CD4-positive, alpha-beta memory T cell (primary cell): ENCODE measurements at regions of chr10 and their contacts with region 1.

Region 1: GRCh38 chr10:88932539-88933256 is 19.9 kb downstream of the ACTA2 start:
- DNase-seq: peak; percentile 48 to 59 (median 55)
- H3K4me3 ChIP-seq: no peak overlapping the region
- H3K4me3 Mint-ChIP-seq: no peak overlapping the region
- H3K27ac ChIP-seq: no peak overlapping the region
- H3K27ac Mint-ChIP-seq: peak overlapping the region in 5 of 7 donors; percentile 13 to 76 (median 60)
- H3K4me1 ChIP-seq: peaks cover 15% of the 10 kb centered on the region
- H3K4me1 Mint-ChIP-seq: peaks cover 13 to 22% (median 15%) of the 10 kb centered on the region in 4 donors
- H3K27me3 ChIP-seq: no peaks in the 10 kb centered on the region
- H3K27me3 Mint-ChIP-seq: no peaks in the 10 kb centered on the region

Region 2: DNA sequence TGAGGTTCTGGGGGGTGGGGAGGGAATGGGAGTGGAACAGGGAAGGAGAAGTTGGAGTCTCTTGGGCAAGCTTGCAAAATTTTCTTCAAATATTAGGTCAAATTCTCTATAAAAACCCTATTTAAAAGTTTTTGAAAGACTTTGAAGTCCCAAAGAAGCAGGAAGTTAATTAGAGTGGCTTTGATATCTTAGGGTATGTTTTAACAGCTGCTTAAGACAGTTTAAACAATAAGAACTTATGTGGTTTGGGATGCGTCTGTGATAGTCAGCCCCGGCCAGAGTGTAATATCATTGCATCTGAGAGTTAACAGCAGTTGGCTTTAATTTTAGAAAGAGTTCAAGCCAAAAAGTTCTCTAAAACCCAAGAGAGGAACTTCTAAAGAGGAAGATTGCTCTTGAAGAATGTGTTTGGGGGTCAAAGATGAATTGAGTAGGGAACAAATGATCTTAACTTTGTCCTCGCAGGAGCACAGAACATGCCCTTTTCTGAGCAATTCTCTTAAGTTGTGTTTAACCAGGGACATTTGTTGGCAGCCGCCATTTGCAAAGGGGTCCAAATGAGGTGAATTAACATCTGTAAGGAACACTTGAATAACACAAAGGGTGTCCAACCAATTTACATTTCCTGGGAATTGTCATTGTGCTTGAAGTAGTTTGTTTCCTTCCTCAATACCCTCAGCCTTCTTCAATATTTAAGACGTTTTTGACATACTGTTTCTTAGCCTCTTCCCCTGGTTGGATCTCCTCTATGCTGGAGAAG is 886.9 kb before region 1 on chr10:
- CTCF ChIA-PET with region 1: no interaction called
- POLR2A ChIA-PET with region 1: no interaction called
- intact Hi-C with region 1: no loop called
- DNase-seq: no peak
- H3K4me3 ChIP-seq: no peak overlapping the region
- H3K4me3 Mint-ChIP-seq: no peak overlapping the region
- H3K27ac ChIP-seq: no peak overlapping the region
- H3K27ac Mint-ChIP-seq: no peak overlapping the region
- H3K4me1 ChIP-seq: peaks cover 5% of the 10 kb centered on the region
- H3K4me1 Mint-ChIP-seq: peaks cover 0 to 5% (median 1%) of the 10 kb centered on the region in 4 donors
- H3K27me3 ChIP-seq: no peaks in the 10 kb centered on the region
- H3K27me3 Mint-ChIP-seq: no peaks in the 10 kb centered on the region

Region 3: GRCh38 chr10:88687853-88688467 is 244.7 kb before region 1 on chr10:
- CTCF ChIA-PET with region 1: interaction called, 14 read pairs
- POLR2A ChIA-PET with region 1: no interaction called
- intact Hi-C with region 1: no loop called
- DNase-seq: peak in 4 of 5 donors; percentile 18 to 26 (median 21)
- H3K4me3 ChIP-seq: no peak overlapping the region
- H3K4me3 Mint-ChIP-seq: no peak overlapping the region
- H3K27ac ChIP-seq: no peak overlapping the region
- H3K27ac Mint-ChIP-seq: no peak overlapping the region
- H3K4me1 ChIP-seq: no peaks in the 10 kb centered on the region
- H3K4me1 Mint-ChIP-seq: no peaks in the 10 kb centered on the region
- H3K27me3 ChIP-seq: no peaks in the 10 kb centered on the region
- H3K27me3 Mint-ChIP-seq: peaks cover 0 to 2% of the 10 kb centered on the region in 2 donors

Region 4: DNA sequence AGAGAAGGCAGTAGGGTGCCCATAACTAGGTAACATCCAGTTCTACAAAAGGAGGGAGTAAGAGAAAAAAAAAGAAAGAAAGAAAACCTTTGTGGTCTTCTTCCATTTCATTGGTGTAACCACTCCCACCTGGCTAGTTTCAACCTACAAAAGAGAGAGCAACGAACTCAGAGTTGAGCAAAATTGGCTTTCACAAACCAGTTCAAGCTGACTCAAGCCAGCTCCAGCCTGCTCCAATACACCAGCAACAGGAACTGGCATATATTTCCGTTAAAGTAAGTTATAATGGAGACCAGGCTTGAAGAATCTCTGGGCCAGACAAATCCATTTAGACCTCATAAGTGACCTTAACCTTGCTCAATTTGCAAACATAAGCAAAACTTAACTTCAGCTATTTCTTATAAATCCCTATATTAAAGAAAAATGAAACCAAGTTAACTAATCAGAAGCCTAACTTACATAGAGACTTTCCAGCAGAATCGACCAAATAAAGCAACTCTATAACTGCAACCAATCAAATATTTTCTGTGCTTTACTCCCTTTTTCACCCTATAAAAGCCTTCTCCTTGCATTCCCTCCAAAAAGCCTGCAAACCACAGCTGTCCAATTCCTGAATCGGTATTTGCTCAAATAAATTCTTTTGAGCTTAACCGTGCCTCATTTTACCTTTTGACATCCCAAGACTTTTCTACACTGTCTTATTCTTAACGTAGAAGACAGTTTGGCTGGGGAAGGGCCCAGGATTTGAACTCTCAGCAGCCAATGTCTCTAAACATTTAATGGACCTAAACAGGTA is 91.2 kb before region 1 on chr10:
- CTCF ChIA-PET with region 1: interaction called, 507 read pairs
- POLR2A ChIA-PET with region 1: interaction called, 23 read pairs
- intact Hi-C with region 1: no loop called
- DNase-seq: no peak
- H3K4me3 ChIP-seq: no peak overlapping the region
- H3K4me3 Mint-ChIP-seq: no peak overlapping the region
- H3K27ac ChIP-seq: no peak overlapping the region
- H3K27ac Mint-ChIP-seq: peak overlapping the region in 1 of 7 donors; percentile 19
- H3K4me1 ChIP-seq: no peaks in the 10 kb centered on the region
- H3K4me1 Mint-ChIP-seq: no peaks in the 10 kb centered on the region
- H3K27me3 ChIP-seq: no peaks in the 10 kb centered on the region
- H3K27me3 Mint-ChIP-seq: peaks cover 5 to 6% of the 10 kb centered on the region in 2 donors

Region 5: GRCh38 chr10:88901206-88901983 is 31.3 kb before region 1 on chr10:
- CTCF ChIA-PET with region 1: interaction called, 21 read pairs
- POLR2A ChIA-PET with region 1: no interaction called
- intact Hi-C with region 1: no loop called
- DNase-seq: no peak
- H3K4me3 ChIP-seq: no peak overlapping the region
- H3K4me3 Mint-ChIP-seq: no peak overlapping the region
- H3K27ac ChIP-seq: no peak overlapping the region
- H3K27ac Mint-ChIP-seq: peak overlapping the region in 2 of 7 donors; percentile 23 to 49
- H3K4me1 ChIP-seq: peaks cover 47% of the 10 kb centered on the region
- H3K4me1 Mint-ChIP-seq: peaks cover 32 to 44% (median 38%) of the 10 kb centered on the region in 4 donors
- H3K27me3 ChIP-seq: no peaks in the 10 kb centered on the region
- H3K27me3 Mint-ChIP-seq: no peaks in the 10 kb centered on the region

Region 6: GRCh38 chr10:88990384-88991160 is 57.9 kb after region 1 on chr10 and contains the start of gene FAS:
- CTCF ChIA-PET with region 1: interaction called, 138 read pairs
- POLR2A ChIA-PET with region 1: interaction called, 8 read pairs
- intact Hi-C with region 1: loop called (anchors 1 kb)
- DNase-seq: peak; percentile 80 to 95 (median 83)
- H3K4me3 ChIP-seq: peak within 1 kb of the TSS; percentile 68 to 81
- H3K4me3 Mint-ChIP-seq: peak within 1 kb of the TSS; percentile 95 to 100 (median 99)
- H3K27ac ChIP-seq: peak within 1 kb of the TSS; percentile 93
- H3K27ac Mint-ChIP-seq: peak within 1 kb of the TSS; percentile 96 to 100 (median 97)
- H3K4me1 ChIP-seq: peaks cover 71% of the 10 kb centered on the region
- H3K4me1 Mint-ChIP-seq: peaks cover 53 to 82% (median 63%) of the 10 kb centered on the region in 4 donors
- H3K27me3 ChIP-seq: no peaks in the 10 kb centered on the region
- H3K27me3 Mint-ChIP-seq: no peaks in the 10 kb centered on the region
- total RNA-seq, gene FAS: 42.4 to 44.2 TPM

Region 7: DNA sequence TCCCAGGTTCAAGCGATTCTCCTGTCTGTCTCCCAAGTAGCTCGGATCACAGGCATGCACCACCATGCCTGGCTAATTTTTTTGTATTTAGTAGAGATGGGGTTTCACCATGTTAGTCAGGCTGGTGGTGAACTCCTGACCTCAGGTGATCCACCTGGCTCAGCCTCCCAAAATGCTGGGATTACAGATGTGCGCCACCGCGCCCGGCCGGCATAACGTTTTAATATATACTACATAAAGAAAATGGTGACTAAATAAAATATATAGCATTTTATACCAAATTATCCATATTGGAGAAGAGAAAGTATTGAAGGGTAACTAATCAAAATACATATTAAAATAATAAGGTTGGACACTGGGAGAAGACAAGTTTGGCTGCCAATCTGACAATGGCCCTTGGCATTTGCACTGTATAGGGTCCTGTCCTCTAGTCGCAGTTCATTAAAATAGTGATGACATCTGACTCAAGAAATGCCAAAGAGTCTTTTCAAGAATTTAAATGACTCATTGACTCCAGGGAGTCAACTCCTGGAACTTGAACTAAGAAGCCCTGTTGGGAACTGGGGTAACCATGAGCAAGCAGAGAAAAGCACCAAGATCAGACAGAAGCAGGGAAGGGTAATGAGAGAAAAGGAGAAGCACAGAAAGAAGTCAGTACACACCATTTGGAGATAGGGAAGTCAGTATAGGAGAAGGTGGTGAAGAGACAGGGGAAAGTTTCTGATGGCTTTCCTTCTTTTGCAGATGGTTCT is 183.4 kb after region 1 on chr10:
- CTCF ChIA-PET with region 1: interaction called, 4 read pairs
- POLR2A ChIA-PET with region 1: no interaction called
- intact Hi-C with region 1: loop called (anchors 2 kb)
- DNase-seq: no peak
- H3K4me3 ChIP-seq: no peak overlapping the region
- H3K4me3 Mint-ChIP-seq: no peak overlapping the region
- H3K27ac ChIP-seq: no peak overlapping the region
- H3K27ac Mint-ChIP-seq: no peak overlapping the region
- H3K4me1 ChIP-seq: peaks cover 2% of the 10 kb centered on the region
- H3K4me1 Mint-ChIP-seq: peaks cover 0 to 2% (median under 1%) of the 10 kb centered on the region in 4 donors
- H3K27me3 ChIP-seq: no peaks in the 10 kb centered on the region
- H3K27me3 Mint-ChIP-seq: peaks cover 15 to 17% of the 10 kb centered on the region in 2 donors

Region 8: GRCh38 chr10:89563861-89564478 is 631.3 kb after region 1 on chr10:
- CTCF ChIA-PET with region 1: no interaction called
- POLR2A ChIA-PET with region 1: no interaction called
- intact Hi-C with region 1: loop called (anchors 10 kb)
- DNase-seq: peak in 4 of 5 donors; percentile 40 to 48 (median 44)
- H3K4me3 ChIP-seq: no peak overlapping the region
- H3K4me3 Mint-ChIP-seq: no peak overlapping the region
- H3K27ac ChIP-seq: no peak overlapping the region
- H3K27ac Mint-ChIP-seq: no peak overlapping the region
- H3K4me1 ChIP-seq: no peaks in the 10 kb centered on the region
- H3K4me1 Mint-ChIP-seq: no peaks in the 10 kb centered on the region
- H3K27me3 ChIP-seq: no peaks in the 10 kb centered on the region
- H3K27me3 Mint-ChIP-seq: peaks cover 8 to 11% of the 10 kb centered on the region in 2 donors